ENCODE measurements at regions of chr12 and their contacts with region 1.

Region 1: GRCh38 chr12:106302401-106303201 is at the start of gene TCP11L2:
- DNase-seq: peak; percentile 94 to 96
- ATAC-seq: peak; percentile 95
- H3K4me3 ChIP-seq: peak within 1 kb of the TSS; percentile 77 to 78
- H3K27ac ChIP-seq: peak within 1 kb of the TSS in 1 of 2 donors; percentile 43
- H3K4me1 ChIP-seq: peaks cover 0 to 3% of the 10 kb centered on the region in 2 donors
- H3K27me3 ChIP-seq: no peaks in the 10 kb centered on the region
- total RNA-seq, gene TCP11L2: 24.8 to 50.9 TPM

Region 2: GRCh38 chr12:106247674-106248311 is 54.8 kb before region 1 on chr12 and contains the start of gene CKAP4:
- intact Hi-C with region 1: loop called (anchors 2 to 5 kb)
- DNase-seq: peak; percentile 89 to 92
- ATAC-seq: peak; percentile 89
- H3K4me3 ChIP-seq: peak within 1 kb of the TSS; percentile 39 to 88
- H3K27ac ChIP-seq: peak within 1 kb of the TSS; percentile 77 to 94
- H3K4me1 ChIP-seq: peaks cover 0 to 4% of the 10 kb centered on the region in 2 donors
- H3K27me3 ChIP-seq: no peaks in the 10 kb centered on the region
- total RNA-seq, gene CKAP4: 61.1 to 69.6 TPM